ENCODE measurements at regions of chr15 and their contacts with region 1.

Region 1: GRCh38 chr15:77419836-77420609 is at the start of gene PEAK1:
- DNase-seq: peak; percentile 100
- ATAC-seq: peak; percentile 98 to 99
- total RNA-seq, gene PEAK1: 59.0 to 71.7 TPM

Region 2: DNA sequence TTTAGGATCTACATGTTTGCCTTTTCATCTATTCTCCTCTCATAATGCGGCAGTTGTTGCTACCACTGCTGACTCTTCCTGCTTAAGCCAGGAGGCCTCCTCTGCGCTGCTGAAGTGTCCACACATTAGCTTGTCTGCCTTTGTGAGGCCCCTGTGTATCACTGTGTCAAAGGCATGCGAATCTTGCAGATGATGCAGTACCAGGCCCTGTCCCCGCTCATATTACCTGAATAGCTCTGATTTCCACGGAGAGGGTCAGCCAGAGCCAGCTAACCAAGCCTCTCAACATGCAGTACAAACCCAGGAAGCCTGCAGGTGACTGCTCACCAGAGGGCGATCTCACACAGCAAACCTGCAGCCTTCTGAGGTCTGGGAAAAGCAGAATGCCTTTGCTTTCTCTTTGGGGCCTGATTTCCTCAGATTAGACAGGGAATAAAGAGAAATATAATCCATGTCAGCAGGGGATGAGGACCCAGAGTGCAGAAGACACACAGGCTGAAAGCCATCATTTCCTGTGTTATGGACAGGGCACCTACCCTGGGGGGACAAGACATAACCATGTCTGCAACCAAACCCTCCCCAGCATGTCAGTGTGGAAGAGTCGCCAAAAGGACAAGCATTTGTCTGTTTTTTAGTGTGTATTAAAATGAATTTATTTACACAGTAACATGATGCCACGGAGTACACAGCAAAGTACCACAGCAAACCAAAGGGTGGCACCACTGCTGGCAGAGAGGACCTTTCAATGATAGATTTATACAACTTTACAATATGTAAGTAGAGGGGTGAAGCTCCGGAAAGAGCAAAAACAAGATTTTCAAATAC is 312.3 kb before region 1 on chr15:
- intact Hi-C with region 1: loop called in 1 of 2 experiments (anchors 5 kb)
- DNase-seq: peak; percentile 46
- ATAC-seq: peak; percentile 54 to 55

Region 3: DNA sequence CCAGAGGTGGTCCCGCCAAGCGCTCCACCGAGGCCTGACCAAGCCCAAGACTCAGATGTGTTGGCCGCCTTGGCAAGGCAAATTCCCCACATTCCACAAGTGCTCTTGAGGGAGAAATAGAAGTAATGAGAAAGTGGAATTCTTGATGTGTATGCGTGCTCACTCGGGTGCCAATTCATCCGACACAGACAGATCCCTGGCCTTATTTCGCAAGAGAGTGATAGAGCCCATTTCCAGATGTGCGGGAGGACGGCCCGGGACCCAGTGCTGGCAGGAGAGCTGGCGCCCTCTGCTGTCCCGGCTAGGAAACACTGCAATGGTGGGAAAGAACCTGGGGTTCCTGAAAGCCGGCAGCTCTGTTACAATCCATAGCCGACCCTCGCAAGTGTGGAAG is 76.7 kb after region 1 on chr15:
- intact Hi-C with region 1: loop called (anchors 5 to 10 kb)
- DNase-seq: peak; percentile 90
- ATAC-seq: peak; percentile 86 to 89

Region 4: DNA sequence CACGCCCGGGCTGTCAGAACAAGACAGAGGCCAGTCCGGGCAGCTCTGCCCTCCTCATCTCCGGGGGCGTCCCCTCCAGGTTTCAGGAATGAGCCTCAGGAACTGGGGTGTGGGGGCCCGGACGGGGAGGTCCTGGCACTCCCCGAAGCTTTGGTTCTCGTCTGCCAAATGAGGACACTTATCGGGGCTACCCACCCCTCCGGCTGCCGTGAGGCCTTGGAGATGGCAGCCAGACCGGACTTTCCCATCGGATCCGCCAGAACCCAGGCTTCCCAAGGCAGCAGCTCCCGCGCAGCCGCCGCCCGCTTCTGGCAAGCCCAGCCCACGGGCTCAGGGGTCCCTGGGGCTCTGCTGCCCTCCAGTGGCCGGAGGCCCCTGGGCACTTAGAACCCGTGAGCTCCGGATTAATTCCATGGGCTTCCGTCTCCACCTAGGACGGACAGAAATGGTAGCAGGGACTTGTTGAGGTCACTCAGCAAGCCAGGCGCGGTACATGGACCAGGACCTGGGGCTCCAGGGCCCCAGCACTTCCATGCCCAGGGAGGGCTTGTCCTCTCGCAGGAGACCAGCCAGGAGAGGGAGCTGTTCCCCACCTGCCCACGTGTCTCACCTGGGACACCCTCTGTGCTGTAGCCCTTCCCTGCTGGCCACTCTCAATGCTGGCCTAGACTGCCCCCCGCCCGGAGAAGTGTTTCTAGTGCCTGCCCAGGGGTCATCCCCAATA is 123.3 kb after region 1 on chr15:
- intact Hi-C with region 1: no loop called
- DNase-seq: peak; percentile 93
- ATAC-seq: peak; percentile 87 to 94